WTC11 (cell line): ENCODE measurements at regions of chr19 and their contacts with region 1.

Region 1: GRCh38 chr19:4567584-4568071 is 8.1 kb upstream of the SEMA6B start:
- DNase-seq: peak; percentile 96
- ATAC-seq: peak; percentile 94
- H3K4me3 Mint-ChIP-seq: no peak overlapping the region
- H3K27ac Mint-ChIP-seq: no peak overlapping the region
- H3K4me1 Mint-ChIP-seq: peaks cover 2% of the 10 kb centered on the region; the same call in 1 of the 2 replicates
- H3K27me3 Mint-ChIP-seq: no peaks in the 10 kb centered on the region
- CTCF ChIP-seq: peak; percentile 99

Region 2: GRCh38 chr19:4529953-4530522 is 37.6 kb before region 1 on chr19:
- CTCF ChIA-PET with region 1: interaction called, 42 read pairs
- POLR2A ChIA-PET with region 1: no interaction called
- DNase-seq: no peak
- ATAC-seq: no peak
- H3K4me3 Mint-ChIP-seq: no peak overlapping the region
- H3K27ac Mint-ChIP-seq: no peak overlapping the region
- H3K4me1 Mint-ChIP-seq: no peaks in the 10 kb centered on the region
- H3K27me3 Mint-ChIP-seq: peaks cover 38% of the 10 kb centered on the region
- CTCF ChIP-seq: no peak

Region 3: GRCh38 chr19:4547303-4548237 is 20.1 kb before region 1 on chr19:
- CTCF ChIA-PET with region 1: interaction called, 15 read pairs
- POLR2A ChIA-PET with region 1: no interaction called
- DNase-seq: peak; percentile 40
- ATAC-seq: no peak
- H3K4me3 Mint-ChIP-seq: no peak overlapping the region
- H3K27ac Mint-ChIP-seq: no peak overlapping the region
- H3K4me1 Mint-ChIP-seq: no peaks in the 10 kb centered on the region
- H3K27me3 Mint-ChIP-seq: no peaks in the 10 kb centered on the region
- CTCF ChIP-seq: no peak

Region 4: DNA sequence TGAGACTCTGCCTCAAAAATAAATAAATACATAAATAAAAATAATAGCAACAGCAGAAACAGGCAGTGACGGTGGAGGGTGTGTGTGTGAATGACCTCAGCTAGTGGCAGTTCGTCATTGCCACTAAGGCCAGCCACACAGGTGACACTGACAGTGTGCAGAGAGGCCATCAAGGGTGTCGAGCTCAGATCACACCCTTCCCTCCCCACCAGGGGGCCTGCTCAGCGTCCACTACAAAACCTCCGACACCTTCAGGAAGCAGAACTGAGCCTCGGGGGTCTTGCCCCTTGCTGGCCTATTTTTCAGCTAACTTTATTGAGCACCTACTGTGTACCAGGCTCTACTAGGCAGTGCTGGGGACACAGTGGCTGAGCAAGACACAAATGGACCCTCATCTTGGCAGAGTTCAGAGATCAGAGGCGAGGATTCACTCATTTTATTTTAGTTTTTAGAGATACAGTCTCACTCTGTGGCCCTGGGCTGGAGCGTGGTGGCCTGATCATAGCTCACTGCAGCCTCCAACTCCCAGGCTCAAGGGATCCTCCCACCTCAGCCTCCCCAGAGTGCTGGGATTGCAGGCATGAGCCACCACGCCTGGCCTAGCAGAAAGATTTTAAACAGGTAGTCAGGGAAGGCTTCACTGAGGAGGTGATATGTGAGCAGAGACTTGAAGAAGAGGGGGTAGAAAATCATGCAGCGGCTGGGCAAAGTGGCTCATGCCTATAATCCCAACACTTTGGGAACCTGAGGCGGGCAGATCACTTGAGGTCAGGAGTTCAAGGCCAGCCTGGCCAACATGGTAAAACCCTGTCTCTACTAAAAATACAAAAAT is 22.2 kb after region 1 on chr19:
- CTCF ChIA-PET with region 1: interaction called, 13 read pairs
- POLR2A ChIA-PET with region 1: no interaction called
- DNase-seq: no peak
- ATAC-seq: no peak
- H3K4me3 Mint-ChIP-seq: no peak overlapping the region
- H3K27ac Mint-ChIP-seq: peak overlapping the region; percentile 47; the same call in 1 of the 2 replicates
- H3K4me1 Mint-ChIP-seq: peaks cover 21% of the 10 kb centered on the region
- H3K27me3 Mint-ChIP-seq: peaks cover 60% of the 10 kb centered on the region
- CTCF ChIP-seq: no peak

Region 5: DNA sequence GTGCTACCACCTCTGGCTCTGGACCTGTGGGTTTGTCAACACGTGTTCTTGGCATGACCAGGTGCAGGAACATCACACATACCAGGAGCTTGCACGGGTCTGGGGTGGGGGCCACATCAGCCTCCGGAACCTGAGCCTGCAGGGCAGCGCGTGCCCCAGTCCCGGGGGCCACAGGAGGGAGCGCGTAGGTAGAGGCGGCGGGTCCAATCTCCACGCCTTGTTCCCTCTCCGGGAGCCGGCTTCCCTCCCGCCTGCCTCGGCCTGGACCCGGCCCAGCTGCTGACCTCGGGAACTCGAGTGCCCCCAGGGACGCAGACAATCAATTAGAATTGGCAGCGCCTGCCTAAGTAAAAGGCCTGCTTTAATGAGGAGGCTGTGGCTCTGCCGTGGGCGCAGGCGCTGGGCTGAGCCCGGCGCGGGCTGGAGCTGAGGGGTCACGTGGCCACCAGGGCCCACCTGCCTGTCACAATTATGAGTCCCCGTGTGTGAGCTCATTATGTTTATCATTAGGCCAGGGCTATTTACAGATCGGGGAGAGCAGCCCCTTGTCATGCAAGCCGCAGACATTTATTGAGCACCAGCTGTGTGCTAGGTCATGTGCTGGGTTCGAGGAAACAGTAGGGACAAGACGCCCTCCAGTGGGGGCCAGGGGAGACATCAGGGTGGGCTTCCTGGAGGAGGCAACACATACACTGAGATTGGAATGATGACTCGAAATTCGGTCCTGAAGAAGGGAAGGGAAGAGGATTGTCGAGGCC is 39.5 kb after region 1 on chr19:
- CTCF ChIA-PET with region 1: interaction called, 23 read pairs
- POLR2A ChIA-PET with region 1: no interaction called
- DNase-seq: peak; percentile 53
- ATAC-seq: peak; percentile 71
- H3K4me3 Mint-ChIP-seq: peak overlapping the region; percentile 27
- H3K27ac Mint-ChIP-seq: no peak overlapping the region
- H3K4me1 Mint-ChIP-seq: peaks cover 15% of the 10 kb centered on the region
- H3K27me3 Mint-ChIP-seq: peaks cover 30% of the 10 kb centered on the region
- CTCF ChIP-seq: no peak

Region 6: DNA sequence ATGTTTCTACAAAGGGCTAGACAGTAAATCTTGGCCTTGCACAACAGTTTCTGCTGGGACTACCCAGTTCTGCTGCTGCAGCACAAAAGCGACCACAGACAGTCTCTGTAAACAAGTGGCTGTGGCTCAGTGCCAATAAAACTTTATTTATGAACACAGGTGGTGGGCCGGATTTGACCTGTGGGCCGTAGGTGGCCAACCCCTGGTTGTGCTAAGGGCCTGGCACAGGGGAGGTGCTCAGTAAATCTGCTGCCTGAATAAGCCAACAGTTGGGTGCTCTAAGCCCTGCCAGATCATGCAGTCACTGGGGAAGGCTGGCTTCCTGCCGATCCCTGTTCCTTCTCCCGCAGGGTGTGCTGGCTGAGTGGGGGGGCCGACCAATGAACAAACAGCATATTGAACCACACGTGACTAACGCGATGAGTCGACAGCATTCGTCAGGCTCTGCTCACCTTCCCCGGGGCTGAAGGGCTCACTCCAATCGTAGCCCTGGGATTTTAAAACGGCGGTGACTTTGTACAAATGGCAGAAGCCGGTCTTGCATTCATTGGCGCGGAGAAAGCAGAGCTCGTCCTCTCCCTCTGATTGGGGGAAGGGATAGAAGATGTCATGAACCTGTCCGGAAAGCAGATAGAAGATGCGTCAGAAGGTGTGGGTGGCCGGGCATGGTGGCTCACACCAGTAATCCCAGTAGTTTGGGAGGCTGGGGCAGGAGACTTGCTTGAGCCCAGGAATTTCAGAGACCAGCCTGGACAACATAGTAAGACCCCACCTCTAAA is 126.8 kb after region 1 on chr19:
- CTCF ChIA-PET with region 1: no interaction called
- POLR2A ChIA-PET with region 1: no interaction called
- DNase-seq: no peak
- ATAC-seq: no peak
- H3K4me3 Mint-ChIP-seq: no peak overlapping the region
- H3K27ac Mint-ChIP-seq: no peak overlapping the region
- H3K4me1 Mint-ChIP-seq: no peaks in the 10 kb centered on the region
- H3K27me3 Mint-ChIP-seq: no peaks in the 10 kb centered on the region
- CTCF ChIP-seq: no peak